ENCODE measurements at regions of chr1 and their contacts with region 1.

Region 1: DNA sequence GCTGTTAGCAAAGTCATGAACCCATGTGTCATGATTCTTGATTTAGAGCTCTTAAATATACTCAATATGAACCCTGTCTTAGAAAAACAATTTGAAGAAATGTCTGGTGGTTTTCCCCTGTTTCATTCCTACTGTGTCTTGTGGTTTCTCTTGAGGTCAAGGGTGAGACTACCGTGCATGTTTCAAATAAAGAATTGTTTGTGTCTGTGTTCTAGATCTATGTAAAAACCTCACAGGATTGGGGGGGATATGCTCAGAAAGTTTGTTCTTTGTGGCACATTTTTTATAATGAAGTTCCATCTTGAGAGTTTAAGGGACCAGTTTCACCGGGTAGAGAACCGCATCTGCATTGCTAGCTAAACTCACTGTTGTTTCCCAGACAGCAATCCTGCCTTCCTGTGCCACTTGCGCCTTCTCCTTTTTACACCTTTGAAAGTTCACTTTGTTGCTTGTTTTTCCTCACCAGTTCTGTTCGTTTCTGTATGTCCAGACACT is 30.9 kb upstream of the CACYBP start:
- DNase-seq: peak; percentile 85
- H3K4me3 Mint-ChIP-seq: peak overlapping the region; percentile 85
- H3K27ac Mint-ChIP-seq: peak overlapping the region; percentile 96
- H3K4me1 Mint-ChIP-seq: peaks cover 64% of the 10 kb centered on the region
- H3K27me3 Mint-ChIP-seq: no peaks in the 10 kb centered on the region

Region 2: DNA sequence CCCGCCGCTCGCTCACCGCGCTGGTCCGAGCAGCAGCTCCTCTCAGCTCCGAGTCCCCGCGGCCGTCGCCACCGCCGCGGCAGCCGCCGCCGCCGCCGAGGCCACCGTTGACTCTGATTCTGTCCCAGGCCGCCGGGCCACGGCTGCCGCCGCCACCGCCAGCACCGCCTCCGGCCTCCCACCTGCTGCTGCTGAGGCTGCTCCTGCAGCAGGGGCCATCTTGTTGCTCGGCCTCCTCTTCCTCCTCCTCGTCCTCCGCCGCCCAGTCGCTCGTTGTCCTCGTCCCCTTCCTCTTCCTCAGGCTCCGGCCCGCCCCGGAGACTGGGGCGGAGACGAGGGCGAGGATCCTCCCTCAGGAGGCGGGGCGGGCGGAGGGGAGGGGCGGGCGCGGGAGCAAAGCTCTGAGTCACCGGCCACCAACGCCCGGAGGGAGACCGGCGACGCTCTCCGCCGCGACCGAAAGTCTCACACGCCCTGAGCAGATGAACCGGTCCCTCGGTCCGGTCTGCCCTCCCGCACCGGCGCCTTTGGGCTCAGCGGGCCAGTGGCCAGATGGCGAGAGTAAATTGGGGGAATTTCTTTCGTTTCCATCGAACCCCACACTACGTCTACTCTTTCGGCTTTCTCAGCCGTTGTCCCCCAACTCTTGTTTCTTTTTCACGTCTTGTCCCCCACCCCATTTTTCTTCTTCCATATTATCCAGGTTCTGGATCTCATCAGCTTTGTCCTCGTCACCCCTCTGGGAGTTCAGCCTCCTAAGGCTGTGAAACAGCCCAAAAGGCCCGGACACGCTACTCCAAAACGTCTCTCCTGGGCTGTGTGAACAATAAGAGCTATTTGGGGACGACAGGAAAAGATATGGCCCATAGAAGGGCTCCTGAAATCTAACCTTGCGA is 946.5 kb before region 1 on chr1 and contains the start of gene RC3H1:
- intact Hi-C with region 1: loop called (anchors 10 kb)
- DNase-seq: peak; percentile 96
- H3K4me3 Mint-ChIP-seq: peak within 1 kb of the TSS; percentile 93
- H3K27ac Mint-ChIP-seq: peak within 1 kb of the TSS; percentile 94
- H3K4me1 Mint-ChIP-seq: peaks cover 33% of the 10 kb centered on the region
- H3K27me3 Mint-ChIP-seq: peaks cover 2% of the 10 kb centered on the region
- total RNA-seq, gene RC3H1: 41.7 and 43.3 TPM in 2 replicates

Region 3: DNA sequence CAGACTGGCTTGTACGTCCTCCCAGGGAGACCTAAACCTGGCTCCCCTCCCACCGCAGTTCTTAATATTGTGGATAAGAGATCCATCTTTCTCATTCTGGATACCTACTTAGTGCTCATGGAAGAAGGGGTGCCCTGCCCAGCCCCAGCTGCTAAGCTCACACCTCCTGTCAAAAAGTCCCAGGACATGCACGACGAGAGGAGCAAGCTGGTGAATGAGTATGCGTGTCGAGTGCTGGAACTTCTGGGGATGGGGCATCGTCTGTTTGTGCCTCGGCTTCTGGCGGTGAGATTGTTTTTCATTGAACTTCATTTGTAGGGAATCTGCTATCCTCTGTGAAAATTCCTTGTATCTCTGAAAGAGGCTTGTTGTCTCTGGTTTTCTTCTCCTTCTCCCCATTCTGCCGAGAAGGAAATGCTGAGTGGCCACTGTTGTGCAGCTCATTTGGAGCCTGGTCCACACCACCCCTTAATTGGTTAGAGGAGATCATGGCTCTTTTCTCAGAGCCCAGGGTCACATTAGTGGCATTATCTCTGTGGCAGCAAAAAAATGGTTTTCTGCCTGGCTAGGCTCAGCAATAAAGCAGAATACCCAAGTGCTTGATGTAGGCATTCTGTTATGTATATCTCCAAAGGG is 168.5 kb before region 1 on chr1:
- intact Hi-C with region 1: loop called (anchors 1 kb)
- DNase-seq: peak; percentile 74
- H3K4me3 Mint-ChIP-seq: no peak overlapping the region
- H3K27ac Mint-ChIP-seq: no peak overlapping the region
- H3K4me1 Mint-ChIP-seq: peaks cover 11% of the 10 kb centered on the region
- H3K27me3 Mint-ChIP-seq: no peaks in the 10 kb centered on the region

Region 4: GRCh38 chr1:174912264-174912663 is 56.5 kb before region 1 on chr1:
- intact Hi-C with region 1: loop called (anchors 1 kb)
- DNase-seq: no peak
- H3K4me3 Mint-ChIP-seq: no peak overlapping the region
- H3K27ac Mint-ChIP-seq: peak overlapping the region; percentile 20
- H3K4me1 Mint-ChIP-seq: peaks cover 24% of the 10 kb centered on the region
- H3K27me3 Mint-ChIP-seq: no peaks in the 10 kb centered on the region

Region 5: GRCh38 chr1:174957829-174958228 is 11.0 kb before region 1 on chr1:
- intact Hi-C with region 1: loop called (anchors 1 kb)
- DNase-seq: no peak
- H3K4me3 Mint-ChIP-seq: peak overlapping the region; percentile 79
- H3K27ac Mint-ChIP-seq: peak overlapping the region; percentile 81
- H3K4me1 Mint-ChIP-seq: peaks cover 22% of the 10 kb centered on the region
- H3K27me3 Mint-ChIP-seq: no peaks in the 10 kb centered on the region

Region 6: DNA sequence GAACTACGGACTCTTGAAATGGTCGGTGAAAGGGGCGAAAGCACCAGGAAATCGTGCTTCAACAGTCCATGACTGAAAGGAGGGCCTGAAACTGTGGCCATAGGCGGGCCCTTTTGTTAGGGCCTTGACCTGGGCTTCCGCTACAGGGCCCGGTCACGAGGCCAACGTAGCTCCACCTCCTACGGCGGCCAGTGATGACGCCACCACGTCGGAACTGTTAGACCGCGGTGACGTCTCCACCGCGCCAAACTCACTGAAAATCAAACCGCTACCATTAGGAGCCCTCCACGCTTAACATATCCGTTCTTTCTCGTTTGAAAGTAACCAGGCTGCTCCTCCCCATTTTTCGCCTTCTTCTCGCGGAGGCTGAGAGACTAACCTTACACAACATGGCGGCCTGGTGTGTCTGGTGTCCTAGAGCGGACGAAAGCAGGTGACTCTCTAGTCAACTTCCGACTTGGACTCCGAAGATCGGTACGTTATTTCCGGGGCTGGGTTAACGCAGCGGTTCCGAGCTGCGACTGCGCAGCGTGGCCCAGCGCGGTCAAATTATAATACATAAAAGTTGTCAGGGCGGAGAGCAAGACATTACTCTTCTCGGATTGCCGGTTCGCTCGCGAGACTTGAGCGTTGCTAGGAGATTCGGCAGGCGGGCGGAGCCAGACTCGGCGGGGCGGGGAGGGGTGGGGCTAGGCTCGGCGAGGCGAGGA is 30.6 kb after region 1 on chr1:
- intact Hi-C with region 1: loop called (anchors 1 kb)
- DNase-seq: peak; percentile 99
- H3K4me3 Mint-ChIP-seq: no peak overlapping the region
- H3K27ac Mint-ChIP-seq: no peak overlapping the region
- H3K4me1 Mint-ChIP-seq: peaks cover 37% of the 10 kb centered on the region
- H3K27me3 Mint-ChIP-seq: no peaks in the 10 kb centered on the region

Measured in activated CD4-positive, alpha-beta T cell treated with anti-CD3 and anti-CD28 coated beads, Interleukin-2, amount 10 ng/mL, durations not matched to agents 24 days and 14 days (primary cell).